ENCODE measurements at regions of chr19 and their contacts with region 1.

Region 1: DNA sequence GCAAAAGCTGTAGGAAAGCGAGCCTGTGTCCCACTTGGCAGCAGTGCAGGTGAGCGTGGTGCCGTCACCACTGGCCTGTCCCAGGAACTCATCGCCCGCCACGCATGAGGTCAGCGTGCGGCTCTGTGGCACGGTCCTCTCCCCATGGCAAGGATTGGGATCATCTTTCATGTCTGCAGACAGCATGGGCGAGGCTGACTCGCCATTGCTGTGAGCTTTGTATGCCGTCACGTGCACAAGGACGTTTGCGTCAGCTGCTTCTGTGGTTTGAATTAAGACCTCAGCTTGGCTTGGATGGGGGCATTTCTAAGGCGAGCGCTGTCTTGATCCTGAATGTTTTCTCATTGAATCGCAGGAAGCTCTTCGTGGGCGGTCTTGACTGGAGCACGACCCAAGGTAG is 9.8 kb downstream of the DAZAP1 start:
- DNase-seq: no peak
- H3K4me3 ChIP-seq: no peak overlapping the region
- H3K27ac ChIP-seq: peak overlapping the region; percentile 31
- H3K27me3 ChIP-seq: no peaks in the 10 kb centered on the region
- CTCF ChIP-seq: no peak

Region 2: GRCh38 chr19:1382250-1382649 is 34.9 kb before region 1 on chr19:
- CTCF ChIA-PET with region 1: no interaction called
- POLR2A ChIA-PET with region 1: interaction called, 11 read pairs
- DNase-seq: no peak
- H3K4me3 ChIP-seq: no peak overlapping the region
- H3K27ac ChIP-seq: no peak overlapping the region
- H3K27me3 ChIP-seq: no peaks in the 10 kb centered on the region
- CTCF ChIP-seq: no peak